CD8-positive, alpha-beta memory T cell (primary cell): ENCODE measurements at regions of chr3 and their contacts with region 1.

Region 1: DNA sequence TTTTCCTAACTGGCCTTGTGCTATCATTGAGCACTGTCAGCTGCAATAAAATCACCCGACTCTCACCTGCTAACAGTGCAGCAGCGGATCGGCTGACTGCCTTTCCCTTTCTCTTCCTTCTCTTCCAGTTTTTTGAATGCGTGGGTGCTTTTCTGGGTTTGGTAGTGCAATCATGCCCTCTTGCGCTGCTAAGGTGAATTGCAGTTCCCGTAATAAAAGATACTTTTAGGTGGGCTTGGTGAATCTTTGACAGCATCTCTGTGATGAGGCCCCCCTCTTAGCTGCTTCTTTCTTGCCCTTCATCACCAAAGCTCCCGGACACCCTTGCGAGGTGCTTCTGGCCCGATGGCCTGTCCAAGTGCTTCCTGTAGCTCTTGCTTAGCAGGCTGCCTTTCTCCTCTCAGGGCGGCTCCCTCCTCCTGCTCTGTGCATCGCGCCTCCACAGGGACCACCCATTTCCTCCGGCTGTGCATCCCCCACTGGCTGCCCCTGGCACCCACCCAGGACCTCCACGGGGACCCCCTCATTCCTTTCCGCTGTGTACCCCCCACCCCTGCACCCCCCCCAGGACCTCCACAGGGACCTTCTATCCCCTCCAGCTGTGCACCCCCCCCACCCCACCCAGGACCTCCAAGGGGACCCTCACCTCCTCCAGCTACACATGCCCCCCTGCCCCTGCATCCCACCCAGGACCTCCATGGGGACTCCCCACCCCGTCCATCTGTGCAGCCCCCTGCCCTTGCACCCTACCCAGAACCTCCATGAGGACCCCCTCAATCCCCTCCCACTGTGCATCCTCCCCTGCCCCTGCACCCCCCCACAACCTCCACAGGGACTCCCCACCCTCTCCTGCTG is 50.8 kb upstream of the RPL32 start:
- DNase-seq: peak in 4 of 5 donors; percentile 32 to 58 (median 47)
- H3K4me3 ChIP-seq: peak overlapping the region; percentile 38
- H3K4me3 Mint-ChIP-seq: peak overlapping the region in 6 of 7 donors; percentile 12 to 74 (median 46)
- H3K27ac ChIP-seq: no peak overlapping the region
- H3K27ac Mint-ChIP-seq: peak overlapping the region in 1 of 8 donors; percentile 42
- H3K4me1 ChIP-seq: peaks cover 11% of the 10 kb centered on the region
- H3K4me1 Mint-ChIP-seq: peaks cover 11 to 19% (median 12%) of the 10 kb centered on the region in 3 donors
- H3K27me3 ChIP-seq: no peaks in the 10 kb centered on the region
- H3K27me3 Mint-ChIP-seq: peaks cover 6 to 28% of the 10 kb centered on the region in 2 donors

Region 2: GRCh38 chr3:12253561-12254343 is 638.5 kb before region 1 on chr3:
- CTCF ChIA-PET with region 1: no interaction called
- POLR2A ChIA-PET with region 1: no interaction called
- DNase-seq: no peak
- H3K4me3 ChIP-seq: no peak overlapping the region
- H3K4me3 Mint-ChIP-seq: no peak overlapping the region
- H3K27ac ChIP-seq: no peak overlapping the region
- H3K27ac Mint-ChIP-seq: no peak overlapping the region
- H3K4me1 ChIP-seq: no peaks in the 10 kb centered on the region
- H3K4me1 Mint-ChIP-seq: no peaks in the 10 kb centered on the region
- H3K27me3 ChIP-seq: no peaks in the 10 kb centered on the region
- H3K27me3 Mint-ChIP-seq: peaks cover 2 to 29% of the 10 kb centered on the region in 2 donors

Region 3: GRCh38 chr3:12868039-12869034 is 23.9 kb before region 1 on chr3:
- CTCF ChIA-PET with region 1: interaction called, 23 read pairs
- POLR2A ChIA-PET with region 1: no interaction called
- DNase-seq: peak; percentile 45 to 69 (median 49)
- H3K4me3 ChIP-seq: peak overlapping the region; percentile 75
- H3K4me3 Mint-ChIP-seq: peak overlapping the region; percentile 42 to 91 (median 81)
- H3K27ac ChIP-seq: peak overlapping the region; percentile 31
- H3K27ac Mint-ChIP-seq: peak overlapping the region in 3 of 8 donors; percentile 10 to 63 (median 25)
- H3K4me1 ChIP-seq: peaks cover 4% of the 10 kb centered on the region
- H3K4me1 Mint-ChIP-seq: peaks cover 17 to 30% (median 20%) of the 10 kb centered on the region in 3 donors
- H3K27me3 ChIP-seq: no peaks in the 10 kb centered on the region
- H3K27me3 Mint-ChIP-seq: peaks cover 11 to 20% of the 10 kb centered on the region in 2 donors